ENCODE measurements at regions of chr7 and their contacts with region 1.

Region 1: DNA sequence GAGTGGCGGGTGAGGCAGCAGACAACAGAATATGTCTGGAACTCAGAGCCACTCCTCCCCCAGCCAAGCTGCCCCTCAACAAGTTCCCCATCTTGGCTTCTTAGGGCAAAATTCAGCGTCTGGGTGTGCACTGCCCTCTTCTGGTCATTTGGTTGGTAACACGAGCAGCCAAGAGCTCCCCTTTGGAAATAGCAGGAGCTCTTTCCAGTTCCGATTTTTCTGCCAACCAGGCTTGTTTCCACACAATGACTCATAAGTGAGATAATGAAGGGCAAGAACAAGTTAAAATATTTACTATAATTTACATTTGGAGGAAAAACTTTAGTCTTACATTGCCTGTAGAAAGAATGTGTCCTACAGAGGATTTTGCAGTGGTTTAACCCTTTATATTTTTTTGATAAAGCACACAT is 70.5 kb downstream of the ADCYAP1R1 start:
- DNase-seq: peak; percentile 60 to 83 (median 72)
- H3K4me3 ChIP-seq: no peak overlapping the region
- H3K27ac ChIP-seq: no peak overlapping the region
- H3K4me1 ChIP-seq: peaks cover 4% of the 10 kb centered on the region
- H3K27me3 ChIP-seq: no peaks in the 10 kb centered on the region
- CTCF ChIP-seq: peak; percentile 68 to 84 (median 76)
- EP300 ChIP-seq: no peak
- POLR2A ChIP-seq: no peak

Region 2: DNA sequence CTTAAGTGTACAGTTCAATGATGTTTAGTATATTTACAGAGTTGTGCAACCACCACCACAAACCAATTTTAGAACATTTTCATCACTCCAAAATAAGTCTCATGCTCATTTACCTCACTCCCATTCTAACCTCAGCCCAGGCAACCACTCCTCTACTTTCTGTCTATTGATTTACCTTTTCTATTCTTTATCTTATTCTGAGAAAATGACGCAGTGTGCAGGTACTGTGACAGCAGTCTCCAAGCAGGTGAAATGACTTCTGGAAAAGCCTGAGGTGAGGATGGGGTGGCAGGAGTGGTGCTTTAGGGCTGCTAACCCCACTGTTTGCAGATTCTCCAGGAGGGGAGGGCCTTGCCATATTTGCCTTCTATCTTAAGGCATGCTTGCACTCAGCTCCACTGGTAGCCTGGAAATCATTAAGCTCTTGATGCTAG is 488.4 kb before region 1 on chr7:
- intact Hi-C with region 1: no loop called
- DNase-seq: no peak
- H3K4me3 ChIP-seq: no peak overlapping the region
- H3K27ac ChIP-seq: no peak overlapping the region
- H3K4me1 ChIP-seq: no peaks in the 10 kb centered on the region
- H3K27me3 ChIP-seq: no peaks in the 10 kb centered on the region
- CTCF ChIP-seq: no peak
- EP300 ChIP-seq: no peak
- POLR2A ChIP-seq: no peak

Region 3: GRCh38 chr7:30740424-30741181 is 382.1 kb before region 1 on chr7:
- intact Hi-C with region 1: loop called in 1 of 4 experiments (anchors 5 kb)
- DNase-seq: peak; percentile 69 to 89 (median 83)
- H3K4me3 ChIP-seq: no peak overlapping the region
- H3K27ac ChIP-seq: no peak overlapping the region
- H3K4me1 ChIP-seq: no peaks in the 10 kb centered on the region
- H3K27me3 ChIP-seq: no peaks in the 10 kb centered on the region
- CTCF ChIP-seq: peak; percentile 85 to 93 (median 91)
- EP300 ChIP-seq: no peak
- POLR2A ChIP-seq: no peak

Region 4: GRCh38 chr7:30800785-30801252 is 321.8 kb before region 1 on chr7:
- intact Hi-C with region 1: loop called in 2 of 4 experiments (anchors 10 kb)
- DNase-seq: peak in 4 of 5 donors; percentile 47 to 75 (median 52)
- H3K4me3 ChIP-seq: no peak overlapping the region
- H3K27ac ChIP-seq: no peak overlapping the region
- H3K4me1 ChIP-seq: peaks cover 7% of the 10 kb centered on the region
- H3K27me3 ChIP-seq: no peaks in the 10 kb centered on the region
- CTCF ChIP-seq: peak; percentile 54 to 77 (median 61)
- EP300 ChIP-seq: no peak
- POLR2A ChIP-seq: no peak

Region 5: DNA sequence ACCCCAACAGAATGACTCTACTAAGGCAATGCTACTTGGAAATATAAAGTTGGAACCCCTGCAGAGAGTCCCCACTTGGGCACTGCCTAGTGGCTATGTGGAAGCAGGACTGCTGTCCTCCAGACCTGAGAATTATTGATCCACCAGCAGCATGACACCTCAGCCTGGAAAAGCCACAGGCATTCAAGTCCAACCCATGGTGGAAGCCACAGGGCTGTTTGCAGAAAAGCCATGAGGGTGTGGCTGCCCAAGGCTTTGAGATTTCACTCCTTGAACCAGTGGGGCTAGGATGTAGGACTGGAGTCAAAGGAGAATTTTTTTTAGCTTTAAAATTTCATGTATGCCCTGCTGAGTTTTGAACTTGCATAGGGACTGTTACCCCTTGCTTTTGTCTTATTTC is 172.5 kb before region 1 on chr7:
- intact Hi-C with region 1: no loop called
- DNase-seq: no peak
- H3K4me3 ChIP-seq: no peak overlapping the region
- H3K27ac ChIP-seq: no peak overlapping the region
- H3K4me1 ChIP-seq: no peaks in the 10 kb centered on the region
- H3K27me3 ChIP-seq: no peaks in the 10 kb centered on the region
- CTCF ChIP-seq: no peak
- EP300 ChIP-seq: no peak
- POLR2A ChIP-seq: no peak

Region 6: GRCh38 chr7:30983042-30983913 is 139.4 kb before region 1 on chr7:
- intact Hi-C with region 1: loop called (anchors 1 to 10 kb)
- DNase-seq: peak; percentile 76 to 90 (median 87)
- H3K4me3 ChIP-seq: no peak overlapping the region
- H3K27ac ChIP-seq: no peak overlapping the region
- H3K4me1 ChIP-seq: peaks cover under 1% of the 10 kb centered on the region
- H3K27me3 ChIP-seq: no peaks in the 10 kb centered on the region
- CTCF ChIP-seq: peak; percentile 80 to 89 (median 88)
- EP300 ChIP-seq: no peak
- POLR2A ChIP-seq: no peak

Region 7: DNA sequence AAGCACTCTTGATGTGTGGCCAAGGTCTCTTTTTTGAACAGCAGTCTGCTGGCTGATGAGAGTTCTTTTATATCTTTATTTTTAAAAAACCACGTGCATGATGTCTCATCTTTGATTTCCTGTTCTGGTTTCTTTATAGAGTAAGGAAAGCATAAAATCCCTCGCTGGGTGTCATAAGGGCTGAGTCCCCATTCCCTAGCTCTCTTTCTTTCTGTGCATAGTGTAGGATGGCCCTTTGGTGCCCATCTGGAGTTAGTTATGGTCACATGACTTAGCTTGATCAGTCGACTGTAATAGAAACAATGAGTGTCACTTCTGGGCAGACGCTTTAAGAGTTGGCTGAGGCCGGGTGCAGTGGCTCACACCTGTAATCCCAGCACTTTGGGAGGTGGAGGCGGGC is 120.4 kb before region 1 on chr7:
- intact Hi-C with region 1: no loop called
- DNase-seq: no peak
- H3K4me3 ChIP-seq: no peak overlapping the region
- H3K27ac ChIP-seq: no peak overlapping the region
- H3K4me1 ChIP-seq: no peaks in the 10 kb centered on the region
- H3K27me3 ChIP-seq: no peaks in the 10 kb centered on the region
- CTCF ChIP-seq: no peak
- EP300 ChIP-seq: no peak
- POLR2A ChIP-seq: no peak